AG04450 (cell line): ENCODE measurements at regions of chr17 and their contacts with region 1.

Region 1: GRCh38 chr17:33038740-33039139 is 47.1 kb downstream of the SPACA3 start:
- DNase-seq: no peak
- H3K4me3 ChIP-seq: no peak overlapping the region
- H3K27ac ChIP-seq: no peak overlapping the region
- H3K27me3 ChIP-seq: peaks cover 3% of the 10 kb centered on the region
- CTCF ChIP-seq: peak; percentile 67

Region 2: GRCh38 chr17:32835291-32835761 is 203.4 kb before region 1 on chr17:
- CTCF ChIA-PET with region 1: no interaction called
- POLR2A ChIA-PET with region 1: no interaction called
- DNase-seq: no peak
- H3K4me3 ChIP-seq: no peak overlapping the region
- H3K27ac ChIP-seq: no peak overlapping the region
- H3K27me3 ChIP-seq: no peaks in the 10 kb centered on the region
- CTCF ChIP-seq: no peak

Region 3: GRCh38 chr17:32971171-32971570 is 67.6 kb before region 1 on chr17:
- CTCF ChIA-PET with region 1: no interaction called
- POLR2A ChIA-PET with region 1: no interaction called
- DNase-seq: no peak
- H3K4me3 ChIP-seq: no peak overlapping the region
- H3K27ac ChIP-seq: no peak overlapping the region
- H3K27me3 ChIP-seq: no peaks in the 10 kb centered on the region
- CTCF ChIP-seq: no peak

Region 4: GRCh38 chr17:33021731-33022408 is 16.9 kb before region 1 on chr17:
- CTCF ChIA-PET with region 1: interaction called, 13 read pairs
- POLR2A ChIA-PET with region 1: interaction called, 4 read pairs
- DNase-seq: no peak
- H3K4me3 ChIP-seq: no peak overlapping the region
- H3K27ac ChIP-seq: no peak overlapping the region
- H3K27me3 ChIP-seq: peaks cover 28% of the 10 kb centered on the region
- CTCF ChIP-seq: peak; percentile 31

Region 5: GRCh38 chr17:33049781-33050414 is 11.2 kb after region 1 on chr17:
- CTCF ChIA-PET with region 1: interaction called, 12 read pairs
- POLR2A ChIA-PET with region 1: no interaction called
- DNase-seq: no peak
- H3K4me3 ChIP-seq: no peak overlapping the region
- H3K27ac ChIP-seq: no peak overlapping the region
- H3K27me3 ChIP-seq: peaks cover 10% of the 10 kb centered on the region
- CTCF ChIP-seq: peak; percentile 96

Region 6: DNA sequence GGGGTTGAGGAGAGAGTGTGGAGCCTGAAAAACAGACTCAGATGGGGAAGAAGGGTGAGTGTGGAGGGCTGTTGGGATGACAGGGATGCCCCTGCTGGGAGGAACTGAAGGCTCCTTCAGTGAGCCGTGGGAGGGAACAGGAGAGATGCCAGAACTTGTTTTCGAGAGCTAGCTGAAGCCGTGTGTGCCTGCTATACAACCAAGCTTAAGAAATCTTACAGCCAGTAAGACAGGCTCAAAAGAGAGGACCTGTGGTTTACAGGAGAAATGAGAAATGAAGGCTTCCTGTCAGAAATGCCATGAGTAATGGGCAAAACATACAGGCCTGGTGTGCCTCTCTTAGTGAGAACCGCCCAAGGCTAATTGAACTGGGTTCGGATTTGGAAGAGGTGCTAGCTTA is 52.5 kb after region 1 on chr17:
- CTCF ChIA-PET with region 1: no interaction called
- POLR2A ChIA-PET with region 1: no interaction called
- DNase-seq: no peak
- H3K4me3 ChIP-seq: no peak overlapping the region
- H3K27ac ChIP-seq: no peak overlapping the region
- H3K27me3 ChIP-seq: no peaks in the 10 kb centered on the region
- CTCF ChIP-seq: no peak